OCI-LY7 (cell line): ENCODE measurements at regions of chr6 and their contacts with region 1.

Region 1: DNA sequence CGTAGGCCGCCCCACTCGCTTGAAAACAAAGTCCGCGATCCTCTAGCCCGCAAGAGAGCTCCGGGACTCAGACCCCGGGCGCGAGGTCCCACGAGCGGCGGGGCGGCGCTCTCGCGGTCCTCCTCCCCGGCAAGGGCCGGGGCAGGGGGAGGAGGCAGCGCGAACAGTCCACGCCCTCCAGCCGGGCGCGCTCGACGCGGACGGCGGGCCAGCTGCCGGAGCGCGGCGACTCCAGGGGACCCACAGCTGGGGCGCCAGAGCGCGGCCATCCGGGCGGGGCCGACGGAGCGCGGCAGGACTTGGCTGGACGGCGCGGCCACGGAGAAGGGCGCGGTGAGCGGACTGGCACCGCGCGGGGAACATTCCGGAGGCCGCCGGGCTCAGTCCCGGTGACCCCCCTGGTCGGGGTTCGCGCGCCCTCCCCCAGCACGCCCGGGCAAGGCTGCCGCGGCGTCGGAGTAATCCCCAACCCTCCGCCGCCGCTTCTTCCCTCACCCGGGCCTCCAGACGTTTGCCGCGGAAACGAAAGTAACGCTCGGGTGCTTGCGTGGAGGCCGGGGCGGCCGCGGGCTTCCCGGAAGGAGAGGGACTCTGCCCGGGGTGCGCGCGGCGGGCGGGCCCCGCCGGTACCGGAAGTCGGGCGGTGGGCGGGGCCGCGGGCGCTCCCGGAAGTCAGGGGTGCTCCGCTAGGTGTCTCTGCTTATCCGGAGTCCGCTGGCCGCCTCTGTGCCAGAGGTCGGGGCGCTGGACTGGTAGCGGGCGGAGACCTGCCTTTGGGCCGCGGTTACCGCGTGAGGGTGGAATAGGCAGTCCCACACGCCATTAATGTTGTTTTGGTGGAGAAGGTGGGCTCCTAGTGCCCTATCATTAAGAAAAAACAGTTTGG is at the start of gene RIPK1:
- DNase-seq: peak; percentile 94
- H3K4me3 ChIP-seq: peak within 1 kb of the TSS; percentile 86
- H3K27ac ChIP-seq: peak within 1 kb of the TSS; percentile 87
- H3K4me1 ChIP-seq: peaks cover 43% of the 10 kb centered on the region
- CTCF ChIP-seq: peak; percentile 64
- total RNA-seq, gene RIPK1: 6.1 and 7.5 TPM in 2 replicates

Region 2: GRCh38 chr6:2942914-2943571 is 125.5 kb before region 1 on chr6:
- CTCF ChIA-PET with region 1: no interaction called
- POLR2A ChIA-PET with region 1: no interaction called
- intact Hi-C with region 1: loop called (anchors 2 kb)
- DNase-seq: peak; percentile 62
- H3K4me3 ChIP-seq: peak overlapping the region; percentile 56
- H3K27ac ChIP-seq: peak overlapping the region; percentile 87
- H3K4me1 ChIP-seq: peaks cover 80% of the 10 kb centered on the region
- CTCF ChIP-seq: no peak

Region 3: GRCh38 chr6:3118353-3119039 is 49.9 kb after region 1 on chr6 and contains the start of gene BPHL:
- CTCF ChIA-PET with region 1: no interaction called
- POLR2A ChIA-PET with region 1: interaction called, 4 read pairs
- intact Hi-C with region 1: loop called (anchors 1 kb)
- DNase-seq: peak; percentile 95
- H3K4me3 ChIP-seq: peak within 1 kb of the TSS; percentile 81
- H3K27ac ChIP-seq: peak within 1 kb of the TSS; percentile 22
- H3K4me1 ChIP-seq: peaks cover 18% of the 10 kb centered on the region
- CTCF ChIP-seq: 0 out of 2 replicates have a peak, but pooled peaks have one; percentile 14
- total RNA-seq, gene BPHL: 9.7 and 12.3 TPM in 2 replicates

Region 4: GRCh38 chr6:3258720-3259490 is 190.3 kb after region 1 on chr6 and contains the start of gene PSMG4:
- CTCF ChIA-PET with region 1: no interaction called
- POLR2A ChIA-PET with region 1: no interaction called
- intact Hi-C with region 1: loop called (anchors 2 kb)
- DNase-seq: peak; percentile 90
- H3K4me3 ChIP-seq: peak within 1 kb of the TSS; percentile 95
- H3K27ac ChIP-seq: peak within 1 kb of the TSS; percentile 49
- H3K4me1 ChIP-seq: peaks cover 15% of the 10 kb centered on the region
- CTCF ChIP-seq: no peak
- total RNA-seq, gene PSMG4: 58.3 and 65.4 TPM in 2 replicates

Region 5: DNA sequence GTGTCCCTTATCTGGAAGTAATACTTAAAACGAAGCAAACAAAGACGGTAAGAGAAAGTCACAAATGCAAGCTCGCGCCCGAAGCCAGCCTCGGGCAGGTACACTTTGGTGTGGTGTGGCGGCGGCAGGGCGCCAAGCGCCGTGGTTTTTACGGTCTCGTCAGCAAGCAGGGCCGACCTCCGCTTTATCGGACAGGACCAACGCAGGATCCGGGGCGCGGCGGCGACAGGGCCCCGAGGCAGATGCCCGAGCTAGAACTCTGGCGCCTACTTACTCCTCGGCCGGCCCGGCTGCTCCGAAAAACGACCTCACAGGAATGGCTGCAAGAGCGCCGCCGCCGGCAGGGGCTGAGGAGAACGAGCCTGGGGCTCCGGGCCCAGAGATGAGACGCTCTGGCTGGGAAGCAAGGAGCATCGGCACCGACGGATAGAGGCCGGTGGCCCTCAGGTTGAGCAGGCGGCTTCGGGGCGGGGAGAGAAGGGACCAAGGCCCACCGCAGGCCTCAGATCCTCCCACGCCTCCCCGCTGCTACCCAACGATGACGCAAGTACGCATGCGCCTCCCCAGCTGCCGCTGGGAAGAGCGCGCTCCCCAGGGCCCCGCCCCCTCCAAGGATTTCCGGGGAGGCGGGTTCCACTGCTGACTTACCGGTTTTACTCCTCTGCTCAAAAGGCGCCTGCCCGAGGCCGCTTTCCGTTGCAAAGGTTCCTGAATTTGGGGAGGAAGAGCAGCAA is 949.8 kb after region 1 on chr6:
- CTCF ChIA-PET with region 1: no interaction called
- POLR2A ChIA-PET with region 1: no interaction called
- intact Hi-C with region 1: loop called (anchors 5 kb)
- DNase-seq: peak; percentile 97
- H3K4me3 ChIP-seq: peak overlapping the region; percentile 89
- H3K27ac ChIP-seq: peak overlapping the region; percentile 94
- H3K4me1 ChIP-seq: peaks cover 38% of the 10 kb centered on the region
- CTCF ChIP-seq: peak; percentile 68